ENCODE measurements at regions of chr15 and their contacts with region 1.

Region 1: DNA sequence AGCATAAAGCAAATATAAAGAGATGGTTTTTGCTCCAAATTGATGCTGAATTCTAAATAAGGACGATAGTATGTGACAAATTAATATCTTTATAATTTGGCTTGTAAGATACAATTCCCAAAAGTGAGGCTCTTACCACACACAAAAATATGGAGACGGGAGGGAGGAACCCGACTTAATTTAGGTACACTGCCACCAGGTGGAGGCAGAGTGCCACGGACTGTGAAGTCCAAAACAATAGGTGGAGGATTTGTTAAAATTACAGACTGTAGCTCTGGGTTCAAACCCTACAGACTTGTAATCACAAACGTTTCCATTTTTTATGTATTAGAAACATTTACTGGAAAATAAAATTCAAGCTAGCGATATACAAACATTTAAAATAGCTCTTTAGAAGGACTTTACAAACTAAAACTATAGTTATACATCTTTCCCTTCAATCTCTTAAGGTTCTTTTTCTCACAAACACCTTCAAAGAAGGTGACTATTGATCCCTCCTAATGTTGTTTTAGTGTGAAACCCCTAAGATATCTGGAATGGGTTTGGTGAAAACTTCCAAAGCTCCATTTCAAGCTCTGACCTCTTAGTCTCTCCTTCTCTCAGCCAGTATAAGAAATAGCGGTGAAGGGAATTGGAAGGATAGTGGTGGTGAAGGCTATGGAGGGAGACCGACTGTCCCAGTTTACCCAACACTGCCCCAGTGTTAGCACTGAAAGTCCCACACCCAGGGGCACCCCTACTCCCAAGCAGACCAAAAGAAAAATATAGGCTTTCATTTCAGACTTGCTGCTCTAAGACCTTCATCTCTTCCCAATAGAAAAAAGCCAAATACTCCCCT is 89.7 kb downstream of the AQP9 start:
- DNase-seq: peak; percentile 75 to 88
- ATAC-seq: peak; percentile 58 to 89; a peak in 3 of 6 replicates
- H3K4me3 ChIP-seq: no peak overlapping the region
- H3K27ac ChIP-seq: peak overlapping the region; percentile 41 to 73
- H3K4me1 ChIP-seq: peaks cover 26% of the 10 kb centered on the region
- CTCF ChIP-seq: peak; percentile 99
- EP300 ChIP-seq: no peak
- POLR2A ChIP-seq: no peak
- RAD21 ChIP-seq: peak; percentile 100

Region 2: DNA sequence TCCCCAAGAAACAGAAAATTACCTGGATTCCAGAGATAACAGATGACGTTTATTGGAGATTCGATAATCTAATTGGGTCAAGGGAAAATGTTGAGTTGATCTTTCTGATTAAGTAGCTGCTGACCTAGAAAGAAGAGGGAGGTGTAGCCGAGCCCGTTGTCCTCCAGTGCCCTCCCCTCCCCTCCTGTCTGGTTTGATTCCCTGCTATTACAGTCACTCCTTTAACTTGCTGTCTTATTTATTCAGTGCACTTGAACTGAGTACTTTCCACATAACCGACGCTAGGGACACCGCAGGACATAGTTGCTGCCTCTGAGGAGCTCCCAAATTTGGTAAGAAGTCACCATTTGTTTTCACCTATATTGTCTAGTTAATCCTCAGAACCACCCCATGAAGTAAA is 13.9 kb after region 1 on chr15:
- CTCF ChIA-PET with region 1: interaction called, 17 read pairs
- POLR2A ChIA-PET with region 1: no interaction called
- DNase-seq: peak in 1 of 2 experiments; percentile 44
- ATAC-seq: peak; percentile 58 to 74; a peak in 5 of 6 replicates
- H3K4me3 ChIP-seq: no peak overlapping the region
- H3K27ac ChIP-seq: no peak overlapping the region
- H3K4me1 ChIP-seq: no peaks in the 10 kb centered on the region
- CTCF ChIP-seq: no peak
- EP300 ChIP-seq: no peak
- POLR2A ChIP-seq: no peak
- RAD21 ChIP-seq: no peak

Region 3: GRCh38 chr15:58331903-58332675 is 104.2 kb after region 1 on chr15:
- CTCF ChIA-PET with region 1: interaction called, 14 read pairs
- POLR2A ChIA-PET with region 1: no interaction called
- DNase-seq: peak; percentile 81 to 100
- ATAC-seq: peak; percentile 90
- H3K4me3 ChIP-seq: 0 out of 3 replicates have a peak overlapping the region, but pooled peaks have one; percentile 1
- H3K27ac ChIP-seq: peak overlapping the region; percentile 92
- H3K4me1 ChIP-seq: peaks cover 43% of the 10 kb centered on the region
- CTCF ChIP-seq: no peak
- EP300 ChIP-seq: peak; percentile 96
- POLR2A ChIP-seq: peak; percentile 28; the same call in 1 of the 2 replicates
- RAD21 ChIP-seq: peak; percentile 63 to 79

Region 4: DNA sequence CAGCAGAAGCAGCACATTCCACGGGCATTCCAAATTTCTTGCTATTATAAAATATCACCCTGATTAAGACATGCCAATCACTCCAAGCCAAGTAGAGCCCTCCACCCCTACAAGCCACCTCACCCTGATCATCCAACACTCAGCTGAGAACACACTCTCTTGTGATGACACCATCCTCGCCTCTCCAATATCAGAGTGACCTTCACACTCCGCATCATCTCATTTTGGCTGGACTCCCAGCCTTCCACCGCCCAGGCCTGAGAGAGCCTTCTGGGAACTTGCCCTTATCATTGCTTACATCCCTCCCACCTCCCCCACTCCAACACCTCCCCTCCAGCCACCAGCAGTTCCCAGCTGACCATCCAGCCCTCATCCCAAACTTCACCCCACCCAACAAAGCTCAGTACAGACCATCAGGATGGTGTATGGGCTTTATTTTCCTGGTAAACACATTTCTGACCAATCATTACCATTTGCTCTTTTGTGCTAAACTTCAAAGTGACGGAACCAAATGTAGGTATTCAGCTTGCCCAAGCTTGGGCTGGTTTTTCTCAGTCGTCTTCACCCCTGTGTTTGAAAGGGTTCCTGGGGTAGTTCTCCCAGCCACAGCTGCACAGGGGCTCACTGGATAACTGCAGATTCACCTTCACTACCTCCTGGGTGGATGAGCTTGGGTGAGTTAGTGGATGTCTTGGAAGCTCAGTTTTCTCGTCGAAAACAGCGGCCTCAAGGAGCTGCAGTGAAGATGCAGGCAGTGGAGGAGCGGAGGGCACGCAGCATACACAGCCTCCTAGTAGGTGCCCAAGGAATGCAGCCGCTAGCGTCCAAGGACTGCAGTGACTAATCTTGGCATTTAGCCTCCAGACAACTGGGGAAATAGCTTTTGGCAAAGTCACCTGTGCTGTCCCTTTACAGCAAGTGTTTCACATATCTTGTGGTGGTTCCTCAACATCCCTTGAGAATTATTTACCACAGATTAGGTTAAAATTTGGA is 319.0 kb after region 1 on chr15:
- CTCF ChIA-PET with region 1: interaction called, 10 read pairs
- POLR2A ChIA-PET with region 1: no interaction called
- DNase-seq: peak; percentile 93 to 95
- ATAC-seq: peak; percentile 93 to 96
- H3K4me3 ChIP-seq: peak overlapping the region; percentile 18; the same call in 1 of the 3 replicates
- H3K27ac ChIP-seq: peak overlapping the region; percentile 95
- H3K4me1 ChIP-seq: peaks cover 51% of the 10 kb centered on the region
- CTCF ChIP-seq: no peak
- EP300 ChIP-seq: peak; percentile 71 to 84; a peak in 3 of 5 replicates
- POLR2A ChIP-seq: no peak
- RAD21 ChIP-seq: peak; percentile 49 to 50; a peak in 4 of 5 replicates

Region 5: GRCh38 chr15:58758138-58758537 is 530.2 kb after region 1 on chr15:
- CTCF ChIA-PET with region 1: interaction called, 18 read pairs
- POLR2A ChIA-PET with region 1: no interaction called
- DNase-seq: peak in 1 of 2 experiments; percentile 47
- ATAC-seq: peak in 1 of 2 experiments; percentile 79; a peak in 3 of 6 replicates
- H3K4me3 ChIP-seq: no peak overlapping the region
- H3K27ac ChIP-seq: no peak overlapping the region; a peak in 1 of 6 replicates
- H3K4me1 ChIP-seq: peaks cover 5% of the 10 kb centered on the region; the same call in 2 of the 3 replicates
- CTCF ChIP-seq: peak; percentile 53
- EP300 ChIP-seq: no peak
- POLR2A ChIP-seq: no peak
- RAD21 ChIP-seq: peak; percentile 77 to 78

Region 6: DNA sequence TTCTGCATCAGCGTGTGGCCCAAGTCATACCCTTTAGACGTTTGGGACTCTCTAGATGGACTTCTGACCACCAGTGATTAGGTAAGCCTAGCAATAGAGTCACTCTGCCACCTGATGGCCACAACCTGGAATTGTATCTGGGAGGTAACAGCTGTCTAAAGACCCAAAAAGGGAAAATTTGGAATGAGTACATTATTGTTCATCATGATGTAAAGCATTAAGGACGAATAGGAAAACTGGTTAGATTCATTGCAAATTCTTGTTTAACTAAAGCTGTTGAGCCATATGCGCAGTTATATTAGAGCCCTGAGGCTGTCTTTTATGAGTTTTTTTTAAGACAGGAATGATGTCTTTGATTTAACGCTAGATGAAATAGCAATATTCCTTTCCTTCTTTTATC is 1273.7 kb after region 1 on chr15:
- CTCF ChIA-PET with region 1: interaction called, 13 read pairs
- POLR2A ChIA-PET with region 1: no interaction called
- DNase-seq: peak; percentile 80 to 90
- ATAC-seq: peak; percentile 95 to 97
- H3K4me3 ChIP-seq: no peak overlapping the region
- H3K27ac ChIP-seq: no peak overlapping the region
- H3K4me1 ChIP-seq: no peaks in the 10 kb centered on the region
- CTCF ChIP-seq: peak; percentile 98
- EP300 ChIP-seq: no peak
- POLR2A ChIP-seq: no peak
- RAD21 ChIP-seq: peak; percentile 95 to 97